Activated T-helper 1 cell treated with anti-CD3 and anti-CD28 coated beads, Interleukin-12 subunit alpha, Interleukin-12 subunit beta, Interleukin-2, Interleukin-4 antibody, amounts not matched to agents 30 ng/mL and 10 ng/mL and 1 ng/mL, durations not matched to agents 14 hours and 24 hours and 36 hours (primary cell): ENCODE measurements at regions of chr6 and their contacts with region 1.

Region 1: GRCh38 chr6:32570363-32570905 is 19.2 kb downstream of the HLA-DRB1 start:
- DNase-seq: no peak
- H3K4me3 Mint-ChIP-seq: no peak overlapping the region
- H3K27ac Mint-ChIP-seq: no peak overlapping the region
- H3K4me1 Mint-ChIP-seq: peaks cover 14% of the 10 kb centered on the region
- H3K27me3 Mint-ChIP-seq: peaks cover 2% of the 10 kb centered on the region

Region 2: DNA sequence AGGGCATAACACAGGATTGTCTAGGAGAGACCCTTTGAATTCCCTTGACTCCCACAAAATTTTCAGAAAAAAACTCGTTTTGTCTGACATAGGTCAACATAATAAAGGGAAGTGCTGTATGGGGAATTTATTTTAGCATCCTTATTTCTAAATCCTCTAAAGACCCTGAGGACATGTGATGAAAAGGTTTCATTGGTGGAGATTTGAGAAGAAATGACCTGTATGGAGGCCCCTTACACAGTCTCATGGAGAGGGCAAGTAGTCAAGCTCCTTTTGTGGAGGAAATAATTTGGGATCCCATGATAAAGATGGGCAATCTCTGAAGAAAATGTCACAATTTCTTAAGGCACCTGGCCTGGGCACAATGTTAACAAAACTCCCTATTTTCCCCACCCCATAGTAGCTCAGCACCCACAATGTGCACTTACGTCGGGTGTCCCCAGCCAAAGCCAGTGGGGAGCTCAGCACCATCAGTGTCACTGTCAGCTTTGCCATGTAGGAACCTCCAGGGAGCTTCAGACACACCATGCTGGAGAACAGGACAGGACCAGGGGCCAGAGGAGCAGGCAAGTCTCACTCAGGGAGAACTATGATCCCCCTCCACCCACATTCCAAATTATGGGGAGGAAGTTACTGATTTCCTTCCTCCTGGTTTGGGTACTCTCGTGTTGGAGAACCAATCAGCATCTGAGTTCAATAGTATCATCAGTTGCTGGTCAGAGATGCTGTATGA is 40.6 kb before region 1 on chr6 and contains the start of gene HLA-DRB5:
- intact Hi-C with region 1: loop called (anchors 2 kb)
- DNase-seq: no peak
- H3K4me3 Mint-ChIP-seq: peak within 1 kb of the TSS; percentile 59
- H3K27ac Mint-ChIP-seq: peak within 1 kb of the TSS; percentile 0
- H3K4me1 Mint-ChIP-seq: peaks cover 4% of the 10 kb centered on the region
- H3K27me3 Mint-ChIP-seq: peaks cover 5% of the 10 kb centered on the region
- total RNA-seq, gene HLA-DRB5: 15.8 and 20.3 TPM in 2 replicates